Ascending aorta (tissue), 2 donors: ENCODE measurements at regions of chr12 and their contacts with region 1.

Region 1: DNA sequence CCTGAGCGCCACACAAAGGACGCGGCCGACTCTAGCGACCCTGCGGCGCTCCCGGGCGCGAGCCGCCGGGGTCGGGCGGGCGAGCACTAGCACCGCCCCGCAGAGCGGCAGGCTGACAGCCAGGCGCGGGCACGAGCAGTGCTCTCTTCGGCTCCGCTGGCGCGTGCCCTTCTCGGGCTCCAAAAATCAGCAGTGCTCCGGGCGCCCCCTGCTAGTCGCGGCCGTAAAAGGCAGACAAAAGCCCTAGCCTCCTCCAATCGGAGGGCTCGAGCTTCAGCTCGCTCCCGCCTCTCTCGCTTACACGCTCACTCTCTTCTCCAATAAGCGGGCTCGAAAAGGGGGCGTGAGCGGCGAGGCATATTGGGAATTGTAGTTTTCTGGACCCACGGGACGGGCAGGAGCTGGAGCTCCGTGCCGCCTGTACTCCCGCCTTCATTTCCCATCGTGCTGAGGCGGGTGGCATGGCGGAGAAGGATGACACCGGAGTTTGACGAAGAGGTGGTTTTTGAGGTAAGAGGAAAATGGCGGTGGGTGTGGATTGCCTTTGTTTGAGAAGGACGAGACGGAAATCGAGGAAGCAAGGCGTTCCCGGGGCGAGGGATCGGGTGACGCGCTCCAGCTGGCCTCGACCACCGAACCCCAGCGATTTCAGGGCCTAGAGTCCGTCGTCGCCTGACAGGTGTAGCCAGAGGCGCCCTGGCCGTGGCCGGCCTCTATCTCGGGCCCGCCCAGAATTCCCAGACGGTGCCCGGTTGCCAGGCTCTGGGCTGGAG is at the starts of genes FGD6 and VEZT:
- DNase-seq: peak; percentile 98 to 100
- H3K4me3 ChIP-seq: peak within 1 kb of the TSS; percentile 83 to 90
- H3K27ac ChIP-seq: peak within 1 kb of the TSS; percentile 98 to 99
- H3K4me1 ChIP-seq: peaks cover 0 to 18% of the 10 kb centered on the region in 2 donors
- H3K27me3 ChIP-seq: no peaks in the 10 kb centered on the region
- CTCF ChIP-seq: peak; percentile 56 to 75 (median 67)
- total RNA-seq, gene FGD6: 2.0 TPM
- total RNA-seq, gene VEZT: 141 TPM

Region 2: GRCh38 chr12:94909663-94910062 is 307.9 kb before region 1 on chr12:
- intact Hi-C with region 1: no loop called
- DNase-seq: no peak
- H3K4me3 ChIP-seq: no peak overlapping the region
- H3K27ac ChIP-seq: no peak overlapping the region
- H3K4me1 ChIP-seq: no peaks in the 10 kb centered on the region
- H3K27me3 ChIP-seq: no peaks in the 10 kb centered on the region
- CTCF ChIP-seq: no peak

Region 3: GRCh38 chr12:95072900-95073697 is 144.5 kb before region 1 on chr12 and contains the start of gene NR2C1:
- intact Hi-C with region 1: loop called (anchors 2 kb)
- DNase-seq: peak; percentile 68 to 95
- H3K4me3 ChIP-seq: peak within 1 kb of the TSS; percentile 82 to 98
- H3K27ac ChIP-seq: peak within 1 kb of the TSS; percentile 85 to 86
- H3K4me1 ChIP-seq: peaks cover 0 to 11% of the 10 kb centered on the region in 2 donors
- H3K27me3 ChIP-seq: no peaks in the 10 kb centered on the region
- CTCF ChIP-seq: no peak
- total RNA-seq, gene NR2C1: 42.3 TPM

Region 4: GRCh38 chr12:95204141-95204866 is 13.3 kb before region 1 on chr12:
- intact Hi-C with region 1: loop called (anchors 2 kb)
- DNase-seq: peak; percentile 18 to 74
- H3K4me3 ChIP-seq: no peak overlapping the region
- H3K27ac ChIP-seq: peak overlapping the region; percentile 66 to 72
- H3K4me1 ChIP-seq: peaks cover 10 to 39% of the 10 kb centered on the region in 2 donors
- H3K27me3 ChIP-seq: no peaks in the 10 kb centered on the region
- CTCF ChIP-seq: no peak

Region 5: GRCh38 chr12:95253386-95253785 is 35.8 kb after region 1 on chr12:
- intact Hi-C with region 1: loop called (anchors 5 kb)
- DNase-seq: no peak
- H3K4me3 ChIP-seq: no peak overlapping the region
- H3K27ac ChIP-seq: no peak overlapping the region
- H3K4me1 ChIP-seq: peaks cover 0 to 6% of the 10 kb centered on the region in 2 donors
- H3K27me3 ChIP-seq: no peaks in the 10 kb centered on the region
- CTCF ChIP-seq: no peak

Region 6: GRCh38 chr12:95336390-95337067 is 119.0 kb after region 1 on chr12:
- intact Hi-C with region 1: loop called (anchors 5 kb)
- DNase-seq: peak in 1 of 2 donors; percentile 82
- H3K4me3 ChIP-seq: peak overlapping the region in 1 of 2 donors; percentile 5
- H3K27ac ChIP-seq: peak overlapping the region; percentile 59 to 78
- H3K4me1 ChIP-seq: peaks cover 0 to 5% of the 10 kb centered on the region in 2 donors
- H3K27me3 ChIP-seq: no peaks in the 10 kb centered on the region
- CTCF ChIP-seq: peak; percentile 78 to 97 (median 85)

Region 7: DNA sequence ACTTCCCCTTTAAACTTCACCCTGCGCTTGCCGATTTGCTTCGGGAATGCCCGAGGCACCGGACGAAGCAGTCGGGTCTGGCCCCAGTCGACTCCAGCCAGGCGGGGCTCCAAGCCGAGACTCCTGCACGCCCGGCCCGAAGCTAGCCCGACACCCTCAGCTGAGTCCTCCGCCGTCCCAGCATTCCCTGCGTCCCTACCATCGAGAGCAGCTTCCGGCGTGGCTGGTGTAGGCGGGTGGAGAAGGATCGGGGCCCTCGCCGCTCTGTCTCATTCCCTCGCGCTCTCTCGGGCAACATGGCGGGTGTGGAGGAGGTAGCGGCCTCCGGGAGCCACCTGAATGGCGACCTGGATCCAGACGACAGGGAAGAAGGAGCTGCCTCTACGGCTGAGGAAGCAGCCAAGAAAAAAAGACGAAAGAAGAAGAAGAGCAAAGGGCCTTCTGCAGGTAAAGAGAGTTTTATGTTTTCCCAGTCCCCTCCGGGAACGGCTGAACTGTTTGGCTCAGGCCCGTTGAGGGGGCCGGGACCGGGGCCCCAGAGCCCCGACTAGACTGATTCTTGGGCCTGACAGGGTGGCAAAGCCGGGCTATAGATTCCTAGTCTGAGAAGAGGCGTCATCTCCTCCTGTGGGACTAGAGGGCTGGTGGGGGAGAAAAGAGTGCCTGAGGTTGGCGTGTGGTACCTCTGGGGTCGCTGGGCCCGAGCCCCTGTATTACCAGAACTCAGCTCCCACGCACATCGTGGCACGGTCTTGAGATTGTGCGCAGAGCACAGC is 256.5 kb after region 1 on chr12 and contains the start of gene METAP2:
- intact Hi-C with region 1: loop called (anchors 5 kb)
- DNase-seq: peak; percentile 83 to 98
- H3K4me3 ChIP-seq: peak within 1 kb of the TSS; percentile 72 to 97
- H3K27ac ChIP-seq: peak within 1 kb of the TSS; percentile 94 to 96
- H3K4me1 ChIP-seq: peaks cover 3 to 25% of the 10 kb centered on the region in 2 donors
- H3K27me3 ChIP-seq: no peaks in the 10 kb centered on the region
- CTCF ChIP-seq: no peak
- total RNA-seq, gene METAP2: 20.6 TPM